ENCODE measurements at regions of chr15 and their contacts with region 1.

Region 1: DNA sequence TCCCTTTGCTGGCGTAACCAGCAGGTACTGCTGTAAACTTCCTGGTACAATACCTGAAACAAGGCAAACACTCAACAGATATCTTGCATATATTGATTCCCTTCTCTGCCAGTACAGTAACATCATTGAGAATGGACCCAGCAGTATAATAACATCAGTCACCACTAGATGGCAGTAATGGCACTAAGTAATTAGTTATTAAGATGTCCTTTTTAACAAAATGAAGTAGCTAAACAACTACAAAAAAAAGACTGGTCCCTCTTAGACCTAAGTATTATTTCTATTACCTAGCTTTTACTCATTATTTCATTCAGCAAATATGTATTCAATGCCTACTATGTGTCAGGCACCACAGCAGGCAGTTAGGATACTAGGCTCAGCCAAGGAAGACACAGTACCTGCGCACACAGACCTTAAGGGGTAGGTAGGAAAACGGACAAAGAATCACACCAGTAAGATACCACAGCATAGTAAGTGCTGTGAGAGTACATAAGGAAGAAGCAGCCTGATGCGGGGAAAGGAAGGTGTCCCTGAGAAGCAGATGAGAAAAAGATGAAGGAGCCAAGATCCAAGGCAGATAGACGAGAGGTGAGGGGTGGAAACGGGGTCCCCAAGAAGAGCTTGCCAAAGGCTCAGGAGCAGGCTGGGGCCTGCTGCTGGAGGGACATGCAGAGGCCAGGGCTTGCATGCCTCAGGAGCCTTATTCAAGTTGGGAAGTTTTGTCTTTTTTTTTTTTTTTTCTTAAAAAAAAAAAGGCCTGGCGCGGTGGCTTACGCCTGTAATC is 102.8 kb upstream of the CHD2 start:
- DNase-seq: no peak
- H3K4me3 ChIP-seq: no peak overlapping the region
- H3K27me3 ChIP-seq: no peaks in the 10 kb centered on the region
- CTCF ChIP-seq: peak; percentile 57

Region 2: DNA sequence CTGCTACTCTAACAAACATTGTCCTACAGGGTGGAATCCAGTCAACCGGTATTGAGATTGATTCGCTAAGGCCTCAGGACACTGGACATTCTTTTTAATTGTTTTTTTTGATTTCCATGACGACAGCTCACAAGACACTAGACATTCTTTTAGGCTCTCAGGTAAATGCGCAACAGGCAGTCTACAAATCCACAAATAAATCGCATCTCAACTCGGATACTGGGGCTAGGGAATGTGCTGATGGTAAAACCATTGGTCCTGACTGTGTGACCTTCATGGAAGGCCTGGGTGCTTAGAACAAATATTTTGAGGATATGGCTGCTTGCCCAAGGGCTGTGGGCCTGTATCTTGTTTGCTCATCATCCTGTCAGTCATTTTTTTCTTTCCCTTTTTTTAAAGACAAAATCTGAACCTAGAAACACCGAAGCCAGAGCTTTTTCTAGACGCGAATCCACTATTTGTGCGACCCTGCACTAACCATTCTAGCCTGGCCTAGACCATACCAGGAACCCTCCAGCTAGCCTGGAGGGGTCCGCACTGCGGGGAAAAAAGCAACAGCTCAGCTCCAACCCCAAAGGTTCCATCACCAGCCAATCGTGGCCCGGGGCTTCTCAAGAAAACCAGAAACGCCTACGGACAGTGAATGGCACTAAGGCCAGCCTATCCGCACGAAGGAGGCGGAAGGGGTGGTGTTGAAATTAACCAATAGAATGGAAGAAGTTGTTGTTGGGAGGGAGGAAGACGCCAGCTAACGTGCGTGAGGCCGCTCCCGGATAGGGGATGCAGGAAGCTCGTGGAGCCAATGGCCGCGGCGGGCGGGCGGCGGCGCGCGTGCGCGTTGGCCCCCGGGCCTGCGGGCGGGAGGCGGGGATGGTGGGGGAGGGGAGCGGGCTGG is 84.7 kb after region 1 on chr15:
- CTCF ChIA-PET with region 1: interaction called, 3 read pairs
- POLR2A ChIA-PET with region 1: interaction called, 10 read pairs
- DNase-seq: peak; percentile 99
- H3K4me3 ChIP-seq: peak overlapping the region; percentile 28
- H3K27me3 ChIP-seq: no peaks in the 10 kb centered on the region
- CTCF ChIP-seq: no peak

Region 3: DNA sequence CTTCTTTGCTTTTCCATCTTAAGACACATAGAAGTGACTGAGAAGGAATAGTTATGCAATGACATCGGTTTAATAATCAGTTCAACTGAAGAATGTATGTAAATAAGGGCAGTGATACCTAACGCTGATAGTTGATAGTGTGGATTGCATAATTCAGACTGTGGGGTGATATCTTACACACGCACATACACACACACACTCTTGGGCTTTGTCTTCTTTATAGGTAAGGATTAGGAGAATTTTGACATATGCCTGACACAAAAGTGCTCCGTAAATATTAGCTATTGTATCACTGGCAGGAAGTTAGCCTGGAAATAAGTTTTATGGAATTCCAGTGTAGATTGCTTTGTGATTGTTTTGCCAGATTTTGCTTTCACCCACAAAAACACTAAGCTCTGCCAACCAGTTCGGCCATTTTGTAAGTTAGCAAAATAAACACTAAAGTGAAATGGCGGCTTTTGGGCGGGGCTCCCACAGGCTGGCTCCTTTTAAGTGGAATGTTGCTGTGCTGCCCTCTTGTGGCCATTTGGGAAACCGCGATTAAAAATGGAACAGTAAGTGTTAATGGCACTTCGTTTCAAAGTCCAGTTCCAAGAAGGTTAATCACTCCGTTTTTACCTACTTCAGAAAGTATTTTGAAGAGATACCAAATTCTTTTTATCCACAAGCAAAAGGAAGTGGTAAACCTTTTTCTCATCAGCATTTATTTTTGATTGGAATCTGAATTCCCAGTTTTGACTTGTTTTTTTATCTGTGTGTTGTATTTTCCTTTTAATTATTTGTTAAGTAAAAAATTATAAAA is 120.4 kb after region 1 on chr15:
- CTCF ChIA-PET with region 1: interaction called, 13 read pairs
- POLR2A ChIA-PET with region 1: no interaction called
- DNase-seq: peak; percentile 60
- H3K4me3 ChIP-seq: no peak overlapping the region
- H3K27me3 ChIP-seq: no peaks in the 10 kb centered on the region
- CTCF ChIP-seq: peak; percentile 83